CD4-positive, alpha-beta T cell (primary cell): ENCODE measurements at regions of chr12 and their contacts with region 1.

Region 1: GRCh38 chr12:4276524-4277204 is 3.1 kb downstream of the CCND2 start:
- DNase-seq: peak; percentile 76 to 94 (median 84)
- ATAC-seq: peak; percentile 27
- H3K4me3 ChIP-seq: peak overlapping the region; percentile 95
- H3K4me3 Mint-ChIP-seq: peak overlapping the region; percentile 95
- H3K27ac ChIP-seq: peak overlapping the region; percentile 19 to 82
- H3K27ac Mint-ChIP-seq: peak overlapping the region; percentile 99
- H3K4me1 ChIP-seq: peaks cover 80% of the 10 kb centered on the region
- H3K4me1 Mint-ChIP-seq: peaks cover 71% of the 10 kb centered on the region
- H3K27me3 ChIP-seq: no peaks in the 10 kb centered on the region
- H3K27me3 Mint-ChIP-seq: no peaks in the 10 kb centered on the region
- CTCF ChIP-seq: peak; percentile 89

Region 2: DNA sequence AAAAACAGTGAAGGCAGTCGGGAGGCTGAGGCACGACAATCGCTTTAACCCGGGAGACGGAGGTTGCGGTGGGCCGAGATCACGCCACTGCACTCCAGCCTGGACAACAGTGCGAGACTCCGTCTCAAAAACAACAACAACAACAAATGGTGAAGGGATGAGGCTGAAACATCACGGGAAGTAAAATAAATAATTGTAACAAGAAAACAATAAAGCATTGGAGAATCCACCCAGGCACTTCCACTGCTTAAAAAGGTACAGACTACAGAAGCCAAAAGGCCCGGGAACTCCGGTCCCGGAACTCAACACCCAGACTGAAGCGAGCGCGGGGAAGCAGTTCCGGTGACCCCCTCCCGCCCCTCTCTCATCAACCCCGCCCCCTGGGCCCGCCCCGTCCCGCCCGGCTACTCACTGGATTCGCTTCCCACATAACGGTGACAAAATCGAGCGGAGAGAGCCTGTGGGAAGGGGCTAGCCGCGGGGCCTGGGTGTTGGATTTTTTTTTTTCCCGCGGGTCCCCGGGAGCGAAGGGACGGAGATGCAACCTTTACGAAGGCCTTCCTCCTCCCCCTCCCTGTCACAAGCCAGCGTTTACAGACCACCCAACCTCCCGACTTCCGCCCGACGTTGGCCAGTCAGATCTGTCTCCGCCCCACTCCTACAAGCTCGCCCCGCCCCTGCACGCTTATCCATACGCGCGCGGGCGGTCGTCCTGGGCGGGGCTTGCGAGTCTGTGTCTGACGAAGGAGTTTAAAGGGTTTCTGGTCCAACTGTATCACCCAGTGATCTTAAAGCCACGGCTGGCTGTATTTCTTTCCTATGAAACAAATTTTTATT is 403.6 kb before region 1 on chr12 and contains the start of gene PARP11:
- CTCF ChIA-PET with region 1: interaction called, 17 read pairs
- POLR2A ChIA-PET with region 1: interaction called, 14 read pairs
- intact Hi-C with region 1: loop called in 1 of 2 experiments (anchors 1 kb)
- DNase-seq: peak; percentile 95 to 99 (median 98)
- ATAC-seq: peak; percentile 94
- H3K4me3 ChIP-seq: peak within 1 kb of the TSS; percentile 79
- H3K4me3 Mint-ChIP-seq: peak within 1 kb of the TSS; percentile 95
- H3K27ac ChIP-seq: peak within 1 kb of the TSS; percentile 88 to 97
- H3K27ac Mint-ChIP-seq: peak within 1 kb of the TSS; percentile 99
- H3K4me1 ChIP-seq: peaks cover 30% of the 10 kb centered on the region
- H3K4me1 Mint-ChIP-seq: peaks cover 59% of the 10 kb centered on the region
- H3K27me3 ChIP-seq: no peaks in the 10 kb centered on the region
- H3K27me3 Mint-ChIP-seq: no peaks in the 10 kb centered on the region
- CTCF ChIP-seq: no peak
- total RNA-seq, gene PARP11: 13.4 TPM

Region 3: DNA sequence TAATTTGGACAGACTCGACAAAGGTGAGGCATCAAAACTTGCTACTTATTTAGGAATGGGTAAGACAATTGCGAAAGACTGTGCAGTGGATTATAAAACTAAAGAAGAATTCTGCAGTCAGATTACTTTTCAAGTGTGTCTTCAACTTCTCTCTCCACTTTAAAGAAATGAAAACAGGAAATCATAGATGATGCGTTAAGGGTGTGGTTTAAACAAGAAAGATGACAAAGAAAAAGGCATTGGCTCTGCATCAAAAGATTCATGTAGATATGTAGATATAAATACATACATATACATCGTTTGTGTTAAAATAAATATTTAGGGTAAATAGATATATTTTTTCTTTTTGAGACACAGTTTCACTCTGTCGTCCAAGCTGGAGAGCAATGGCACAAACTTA is 328.9 kb before region 1 on chr12:
- CTCF ChIA-PET with region 1: interaction called, 9 read pairs
- POLR2A ChIA-PET with region 1: interaction called, 24 read pairs
- intact Hi-C with region 1: no loop called
- DNase-seq: peak in 3 of 14 experiments; percentile 74 to 84 (median 78)
- ATAC-seq: peak; percentile 77
- H3K4me3 ChIP-seq: no peak overlapping the region
- H3K4me3 Mint-ChIP-seq: peak overlapping the region; percentile 52
- H3K27ac ChIP-seq: peak overlapping the region; percentile 84 to 86
- H3K27ac Mint-ChIP-seq: peak overlapping the region; percentile 98
- H3K4me1 ChIP-seq: peaks cover 53% of the 10 kb centered on the region
- H3K4me1 Mint-ChIP-seq: peaks cover 67% of the 10 kb centered on the region
- H3K27me3 ChIP-seq: no peaks in the 10 kb centered on the region
- H3K27me3 Mint-ChIP-seq: no peaks in the 10 kb centered on the region
- CTCF ChIP-seq: no peak

Region 4: DNA sequence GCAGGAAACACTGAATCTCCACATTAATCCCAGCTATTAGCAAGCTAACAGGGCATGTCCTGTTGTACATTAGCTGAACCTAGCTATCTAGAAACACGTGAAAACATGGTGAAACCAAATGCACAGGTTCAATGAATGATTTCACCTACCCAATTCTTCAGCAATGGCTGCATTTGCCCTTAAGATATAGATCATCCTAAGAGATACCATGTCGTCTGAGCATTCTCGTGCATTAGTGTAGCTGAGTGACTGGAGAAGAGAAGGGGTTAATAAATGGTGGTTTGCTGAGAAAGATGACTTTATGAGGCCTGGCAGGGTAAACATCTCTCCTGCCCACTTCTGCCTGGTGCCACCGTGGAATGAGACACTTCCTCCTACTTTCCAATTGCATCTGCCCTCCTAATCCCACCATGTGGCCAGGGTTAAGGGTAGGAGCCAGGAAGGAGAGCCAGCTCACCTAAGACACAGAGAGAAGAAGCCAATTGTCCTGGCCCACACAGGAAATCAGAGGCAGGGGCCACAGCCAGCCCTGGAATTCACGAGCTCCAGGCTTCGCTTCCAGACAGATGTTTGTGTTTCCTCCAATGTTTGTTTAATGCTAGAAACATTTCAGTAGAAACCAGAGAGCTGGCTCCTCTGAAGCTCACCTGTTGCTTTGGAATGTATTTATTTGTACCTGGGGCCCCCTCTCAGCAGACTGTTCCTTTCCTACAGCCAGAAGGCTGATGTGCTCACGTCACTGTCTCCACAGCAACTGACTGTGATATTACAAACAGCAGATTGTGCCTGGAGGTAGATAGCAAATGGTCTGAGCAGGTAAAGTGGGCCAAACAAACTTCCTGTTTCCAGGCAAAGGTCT is 277.5 kb before region 1 on chr12:
- CTCF ChIA-PET with region 1: interaction called, 12 read pairs
- POLR2A ChIA-PET with region 1: interaction called, 7 read pairs
- intact Hi-C with region 1: loop called (anchors 1 kb)
- DNase-seq: peak in 8 of 14 experiments; percentile 11 to 68 (median 30)
- ATAC-seq: peak; percentile 87
- H3K4me3 ChIP-seq: no peak overlapping the region
- H3K4me3 Mint-ChIP-seq: no peak overlapping the region
- H3K27ac ChIP-seq: no peak overlapping the region
- H3K27ac Mint-ChIP-seq: peak overlapping the region; percentile 69
- H3K4me1 ChIP-seq: peaks cover 19% of the 10 kb centered on the region
- H3K4me1 Mint-ChIP-seq: peaks cover 48% of the 10 kb centered on the region
- H3K27me3 ChIP-seq: no peaks in the 10 kb centered on the region
- H3K27me3 Mint-ChIP-seq: no peaks in the 10 kb centered on the region
- CTCF ChIP-seq: no peak

Region 5: GRCh38 chr12:4107436-4107878 is 169.2 kb before region 1 on chr12:
- CTCF ChIA-PET with region 1: interaction called, 14 read pairs
- POLR2A ChIA-PET with region 1: interaction called, 24 read pairs
- intact Hi-C with region 1: loop called (anchors 1 kb)
- DNase-seq: peak; percentile 30 to 92 (median 54)
- ATAC-seq: peak; percentile 99
- H3K4me3 ChIP-seq: no peak overlapping the region
- H3K4me3 Mint-ChIP-seq: no peak overlapping the region
- H3K27ac ChIP-seq: no peak overlapping the region
- H3K27ac Mint-ChIP-seq: peak overlapping the region; percentile 71
- H3K4me1 ChIP-seq: peaks cover 10% of the 10 kb centered on the region
- H3K4me1 Mint-ChIP-seq: peaks cover 12% of the 10 kb centered on the region
- H3K27me3 ChIP-seq: no peaks in the 10 kb centered on the region
- H3K27me3 Mint-ChIP-seq: no peaks in the 10 kb centered on the region
- CTCF ChIP-seq: peak; percentile 81

Region 6: GRCh38 chr12:4148418-4149056 is 128.1 kb before region 1 on chr12:
- CTCF ChIA-PET with region 1: interaction called, 42 read pairs
- POLR2A ChIA-PET with region 1: interaction called, 113 read pairs
- intact Hi-C with region 1: loop called (anchors 2 to 5 kb)
- DNase-seq: peak in 11 of 14 experiments; percentile 16 to 82 (median 43)
- ATAC-seq: peak; percentile 56
- H3K4me3 ChIP-seq: no peak overlapping the region
- H3K4me3 Mint-ChIP-seq: no peak overlapping the region
- H3K27ac ChIP-seq: no peak overlapping the region
- H3K27ac Mint-ChIP-seq: no peak overlapping the region
- H3K4me1 ChIP-seq: peaks cover 51% of the 10 kb centered on the region
- H3K4me1 Mint-ChIP-seq: peaks cover 47% of the 10 kb centered on the region
- H3K27me3 ChIP-seq: no peaks in the 10 kb centered on the region
- H3K27me3 Mint-ChIP-seq: no peaks in the 10 kb centered on the region
- CTCF ChIP-seq: no peak